Gastrocnemius medialis (tissue), 4 donors: ENCODE measurements at regions of chr11 and their contacts with region 1.

Region 1: DNA sequence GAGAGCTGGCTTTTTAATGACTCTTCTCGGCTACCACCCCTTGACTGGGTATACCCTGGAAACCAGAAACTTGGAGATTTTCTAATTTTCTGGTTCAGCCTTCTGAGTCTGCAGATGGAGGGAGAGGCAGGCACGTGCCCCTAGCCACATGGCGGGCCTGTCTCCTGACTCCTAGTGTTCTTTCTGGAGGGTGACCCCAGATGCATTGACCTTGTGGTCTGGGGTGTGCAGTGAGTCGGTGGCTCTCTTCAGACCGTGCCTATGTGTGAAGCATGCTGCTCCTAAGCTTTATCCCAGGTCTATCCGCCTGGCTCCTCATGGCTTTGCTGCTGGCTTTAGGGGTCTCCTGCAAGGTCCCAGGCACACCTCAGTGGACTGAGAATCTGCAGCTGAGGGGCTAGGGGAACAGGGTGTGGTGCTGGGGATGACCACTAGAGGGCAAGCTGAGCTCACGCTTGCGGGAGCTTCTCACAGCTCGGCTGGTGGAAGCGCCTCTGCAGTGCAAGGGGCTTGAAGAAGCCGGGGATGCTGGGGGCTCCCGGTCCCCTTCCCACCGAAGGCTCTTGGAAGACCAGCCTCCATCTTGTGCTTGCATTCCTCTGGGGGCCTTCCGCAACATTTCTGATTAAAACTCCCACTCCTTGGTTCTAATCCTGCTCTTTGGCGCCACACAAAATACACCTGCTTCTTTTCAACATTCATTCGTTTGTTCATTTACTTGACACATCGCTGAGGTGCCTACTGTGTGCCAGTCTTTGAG is 51.8 kb downstream of the OTOG start:
- DNase-seq: peak; percentile 54 to 62
- ATAC-seq: peak; percentile 87 to 90
- H3K4me3 ChIP-seq: no peak overlapping the region
- H3K27ac ChIP-seq: no peak overlapping the region
- H3K4me1 ChIP-seq: peaks cover 0 to 3% of the 10 kb centered on the region in 2 donors
- H3K27me3 ChIP-seq: no peaks in the 10 kb centered on the region
- CTCF ChIP-seq: peak; percentile 90 to 97 (median 96)
- POLR2A ChIP-seq: no peak

Region 2: DNA sequence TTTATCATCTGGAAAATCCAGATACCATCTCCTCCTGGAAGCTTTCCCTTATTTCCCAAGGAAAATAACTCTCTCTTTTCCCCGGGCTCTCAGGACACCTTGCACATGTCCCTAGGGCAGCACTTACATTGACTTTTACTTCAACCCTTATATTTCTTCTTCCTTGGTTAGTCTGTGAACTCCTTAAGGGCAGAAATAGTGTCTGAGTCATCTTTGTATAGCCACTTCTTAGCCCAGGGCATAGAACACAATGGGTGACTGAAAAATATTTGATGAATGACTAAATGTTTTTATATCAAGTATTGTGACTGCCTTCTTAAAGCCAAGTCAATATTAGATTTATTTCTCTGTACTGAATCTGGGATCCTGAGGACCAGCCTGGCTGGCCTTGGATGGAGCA is 75.1 kb after region 1 on chr11:
- in situ Hi-C with region 1: no loop called
- intact Hi-C with region 1: loop called (anchors 10 kb)
- DNase-seq: no peak
- ATAC-seq: peak; percentile 63 to 68
- H3K4me3 ChIP-seq: no peak overlapping the region
- H3K27ac ChIP-seq: no peak overlapping the region
- H3K4me1 ChIP-seq: no peaks in the 10 kb centered on the region
- H3K27me3 ChIP-seq: no peaks in the 10 kb centered on the region
- CTCF ChIP-seq: no peak
- POLR2A ChIP-seq: no peak

Region 3: DNA sequence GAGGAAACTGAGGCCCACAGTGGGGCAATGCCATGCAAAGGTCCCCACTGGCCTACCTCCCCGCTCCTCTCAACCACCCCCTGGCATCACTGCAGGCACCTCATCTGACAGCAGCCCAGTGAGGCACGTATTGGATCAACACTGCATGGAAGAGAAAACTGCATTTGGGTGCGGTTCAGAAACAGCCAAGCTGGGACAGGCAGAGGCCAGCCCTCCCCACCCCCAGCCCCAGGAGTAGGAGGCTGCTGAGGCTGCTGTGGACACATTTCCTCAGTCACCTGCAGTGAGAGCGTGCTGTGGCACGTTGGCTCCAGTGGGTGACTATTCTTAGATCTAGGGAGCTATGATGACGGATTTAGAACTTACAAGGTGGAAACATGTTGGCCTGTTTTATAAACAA is 199.4 kb after region 1 on chr11:
- in situ Hi-C with region 1: no loop called
- intact Hi-C with region 1: no loop called
- DNase-seq: peak; percentile 90 to 95
- ATAC-seq: peak; percentile 90 to 91
- H3K4me3 ChIP-seq: peak overlapping the region in 2 of 4 donors; percentile 12 to 35
- H3K27ac ChIP-seq: peak overlapping the region; percentile 90 to 96 (median 94)
- H3K4me1 ChIP-seq: peaks cover 50 to 52% of the 10 kb centered on the region in 2 donors
- H3K27me3 ChIP-seq: no peaks in the 10 kb centered on the region
- CTCF ChIP-seq: no peak
- POLR2A ChIP-seq: peak in 1 of 2 donors; percentile 35

Region 4: DNA sequence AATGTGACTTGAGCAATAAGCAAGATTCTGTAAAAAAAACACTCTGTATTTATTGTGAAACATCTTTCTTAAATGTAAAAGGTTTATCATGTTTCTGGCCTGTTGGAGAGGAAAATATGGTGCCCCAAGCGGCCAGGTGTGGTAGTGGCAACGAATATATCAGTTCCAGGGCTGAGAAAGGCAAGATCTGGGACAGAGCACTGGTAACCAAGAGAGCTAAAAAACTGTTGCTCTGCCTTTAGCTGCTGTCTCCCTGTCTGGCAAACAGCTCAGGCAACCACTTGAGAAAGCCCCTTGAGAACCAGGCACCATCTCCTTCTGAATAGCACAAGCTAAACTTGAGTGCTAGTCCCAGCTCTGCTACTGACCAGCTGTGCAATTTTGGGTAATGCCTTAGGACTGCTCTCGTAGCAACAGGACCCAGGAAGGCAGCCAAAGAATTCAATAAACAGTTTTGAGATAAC is 265.6 kb after region 1 on chr11:
- in situ Hi-C with region 1: no loop called
- intact Hi-C with region 1: loop called (anchors 10 kb)
- DNase-seq: no peak
- ATAC-seq: no peak
- H3K4me3 ChIP-seq: no peak overlapping the region
- H3K27ac ChIP-seq: no peak overlapping the region
- H3K4me1 ChIP-seq: peaks cover 0 to 3% of the 10 kb centered on the region in 2 donors
- H3K27me3 ChIP-seq: no peaks in the 10 kb centered on the region
- CTCF ChIP-seq: peak in 1 of 5 experiments; percentile 31
- POLR2A ChIP-seq: no peak